ENCODE measurements at regions of chr18 and their contacts with region 1.

Region 1: GRCh38 chr18:36095936-36096519 is 28.7 kb upstream of the RPRD1A start:
- DNase-seq: peak in 1 of 2 experiments; percentile 51
- H3K4me3 ChIP-seq: no peak overlapping the region
- H3K27ac ChIP-seq: no peak overlapping the region
- H3K4me1 ChIP-seq: no peaks in the 10 kb centered on the region
- H3K27me3 ChIP-seq: no peaks in the 10 kb centered on the region
- CTCF ChIP-seq: peak; percentile 73

Region 2: GRCh38 chr18:35923939-35924684 is 171.9 kb before region 1 on chr18:
- CTCF ChIA-PET with region 1: no interaction called
- POLR2A ChIA-PET with region 1: no interaction called
- intact Hi-C with region 1: no loop called
- DNase-seq: no peak
- H3K4me3 ChIP-seq: no peak overlapping the region
- H3K27ac ChIP-seq: no peak overlapping the region
- H3K4me1 ChIP-seq: no peaks in the 10 kb centered on the region
- H3K27me3 ChIP-seq: 0 out of 2 replicates have a peak, but pooled peaks cover 2% of the 10 kb centered on the region
- CTCF ChIP-seq: no peak

Region 3: DNA sequence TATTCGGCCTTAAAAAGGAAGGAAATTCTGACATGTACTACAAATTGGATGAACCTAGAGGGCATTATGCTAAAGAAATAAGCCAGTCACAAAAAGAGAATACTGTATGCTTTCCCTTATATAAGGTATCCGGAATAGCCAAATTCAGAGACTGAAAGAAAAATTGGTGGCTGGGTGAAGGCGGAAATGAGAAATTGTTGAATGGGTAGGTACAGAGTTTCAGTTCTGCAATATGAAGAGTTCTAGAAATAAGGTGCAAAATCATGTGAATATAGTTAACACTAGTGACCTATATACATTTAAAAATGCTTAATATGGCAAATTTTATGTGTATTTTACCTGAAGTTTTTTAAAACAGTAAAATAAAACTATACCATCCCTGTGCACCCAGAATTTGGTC is 80.4 kb before region 1 on chr18:
- CTCF ChIA-PET with region 1: interaction called, 3 read pairs
- POLR2A ChIA-PET with region 1: no interaction called
- intact Hi-C with region 1: loop called (anchors 10 kb)
- DNase-seq: no peak
- H3K4me3 ChIP-seq: no peak overlapping the region
- H3K27ac ChIP-seq: no peak overlapping the region
- H3K4me1 ChIP-seq: no peaks in the 10 kb centered on the region
- H3K27me3 ChIP-seq: no peaks in the 10 kb centered on the region
- CTCF ChIP-seq: no peak

Region 4: DNA sequence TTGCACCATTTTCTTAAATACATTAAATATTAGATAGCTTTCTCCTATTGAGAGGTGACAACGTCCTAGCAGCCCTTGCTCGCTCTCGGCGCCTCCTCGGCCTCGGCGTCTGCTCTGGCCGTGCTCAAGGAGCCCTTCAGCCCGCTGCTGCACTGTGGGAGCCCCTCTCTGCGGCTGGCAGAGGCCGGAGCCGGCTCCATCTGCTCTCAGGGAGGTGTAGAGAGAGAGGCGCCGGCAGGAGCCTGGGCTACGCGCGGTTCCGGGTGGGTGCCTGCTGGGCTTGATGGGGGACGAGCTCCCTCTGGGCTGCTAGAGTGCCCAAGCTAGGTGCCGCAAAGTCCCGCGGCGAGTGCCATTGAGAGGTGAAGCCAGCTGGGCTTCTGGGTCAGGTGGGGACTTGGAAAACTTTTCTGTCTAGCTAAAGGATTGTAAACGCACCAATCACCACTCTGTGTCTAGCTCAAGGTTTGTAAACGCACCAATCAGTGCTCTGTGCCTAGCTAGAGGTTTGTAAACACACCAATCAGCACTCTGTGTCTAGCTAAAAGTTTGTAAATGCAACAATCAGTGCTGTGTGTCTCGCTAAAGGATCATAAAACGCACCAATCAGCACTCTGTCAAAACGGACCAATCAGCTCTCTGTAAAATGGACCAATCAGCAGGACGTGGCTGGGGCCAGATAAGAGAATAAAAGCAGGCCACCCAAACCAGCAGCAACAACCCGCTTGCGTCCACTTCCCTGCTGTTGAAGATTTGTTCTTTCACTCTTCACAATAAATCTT is 31.8 kb before region 1 on chr18:
- CTCF ChIA-PET with region 1: no interaction called
- POLR2A ChIA-PET with region 1: no interaction called
- intact Hi-C with region 1: no loop called
- DNase-seq: no peak
- H3K4me3 ChIP-seq: no peak overlapping the region
- H3K27ac ChIP-seq: no peak overlapping the region
- H3K4me1 ChIP-seq: 0 out of 2 replicates have a peak, but pooled peaks cover 12% of the 10 kb centered on the region
- H3K27me3 ChIP-seq: no peaks in the 10 kb centered on the region
- CTCF ChIP-seq: no peak

Region 5: DNA sequence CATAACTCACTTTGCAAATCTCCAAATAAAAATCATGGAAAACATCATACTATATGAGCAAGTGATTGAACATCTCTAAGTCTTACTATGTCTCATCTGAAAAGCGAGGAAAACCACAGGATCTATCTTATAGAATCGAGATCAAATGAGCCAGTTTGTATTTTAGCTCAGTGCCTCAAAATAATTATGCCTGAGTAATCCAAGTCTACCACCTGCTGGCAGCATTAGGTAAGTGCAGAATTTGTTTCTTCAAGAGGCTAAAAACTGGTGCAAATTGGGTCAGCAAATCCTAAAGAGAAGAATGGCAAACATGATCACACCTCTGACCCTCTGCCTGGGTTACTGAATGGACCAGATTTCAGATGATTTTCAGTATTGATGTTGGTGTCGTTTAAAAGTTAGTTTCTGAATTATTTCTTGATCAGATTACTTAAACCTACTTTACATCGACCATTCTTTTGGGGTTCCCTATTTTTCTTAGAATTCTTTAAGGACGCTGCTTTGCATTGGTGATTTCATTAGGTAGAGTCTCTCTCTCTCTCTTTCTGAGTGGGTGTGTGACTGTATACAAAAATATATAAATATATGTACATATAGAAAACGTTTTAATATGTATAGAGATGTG is 188.8 kb after region 1 on chr18:
- CTCF ChIA-PET with region 1: interaction called, 4 read pairs
- POLR2A ChIA-PET with region 1: no interaction called
- intact Hi-C with region 1: loop called (anchors 1 kb)
- DNase-seq: peak; percentile 11 to 41
- H3K4me3 ChIP-seq: no peak overlapping the region
- H3K27ac ChIP-seq: no peak overlapping the region
- H3K4me1 ChIP-seq: no peaks in the 10 kb centered on the region
- H3K27me3 ChIP-seq: no peaks in the 10 kb centered on the region
- CTCF ChIP-seq: peak; percentile 81

Region 6: DNA sequence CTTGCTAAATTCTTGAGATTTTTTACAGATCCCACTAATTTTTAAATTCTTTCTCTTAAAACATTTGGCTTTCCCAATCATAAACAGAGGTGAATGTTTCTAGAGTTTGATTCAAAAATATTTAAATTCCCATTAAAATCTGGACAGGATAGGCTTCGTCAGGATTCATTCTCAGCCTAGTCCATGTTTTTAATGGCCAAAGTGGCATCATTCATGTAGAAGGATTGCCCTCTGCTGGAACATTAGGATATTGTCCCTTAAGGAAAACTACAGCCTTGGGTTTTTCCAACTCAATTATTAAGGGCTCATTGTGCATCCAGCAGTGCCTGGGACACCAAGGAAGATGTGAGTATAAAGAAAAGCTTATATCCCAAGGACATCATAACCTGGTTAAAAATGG is 661.1 kb after region 1 on chr18:
- CTCF ChIA-PET with region 1: no interaction called
- POLR2A ChIA-PET with region 1: no interaction called
- intact Hi-C with region 1: loop called (anchors 5 kb)
- DNase-seq: no peak
- H3K4me3 ChIP-seq: no peak overlapping the region
- H3K27ac ChIP-seq: no peak overlapping the region
- H3K4me1 ChIP-seq: peaks cover 7% of the 10 kb centered on the region; the same call in 1 of the 2 replicates
- H3K27me3 ChIP-seq: no peaks in the 10 kb centered on the region
- CTCF ChIP-seq: peak; percentile 76

Region 7: GRCh38 chr18:36809590-36810381 is 713.8 kb after region 1 on chr18:
- CTCF ChIA-PET with region 1: no interaction called
- POLR2A ChIA-PET with region 1: no interaction called
- intact Hi-C with region 1: loop called (anchors 10 kb)
- DNase-seq: peak in 1 of 2 experiments; percentile 37
- H3K4me3 ChIP-seq: no peak overlapping the region
- H3K27ac ChIP-seq: no peak overlapping the region
- H3K4me1 ChIP-seq: no peaks in the 10 kb centered on the region
- H3K27me3 ChIP-seq: no peaks in the 10 kb centered on the region
- CTCF ChIP-seq: peak; percentile 78

Measured in PC-9 (cell line).